Caco-2 (cell line): ENCODE measurements at regions of chr4 and their contacts with region 1.

Region 1: DNA sequence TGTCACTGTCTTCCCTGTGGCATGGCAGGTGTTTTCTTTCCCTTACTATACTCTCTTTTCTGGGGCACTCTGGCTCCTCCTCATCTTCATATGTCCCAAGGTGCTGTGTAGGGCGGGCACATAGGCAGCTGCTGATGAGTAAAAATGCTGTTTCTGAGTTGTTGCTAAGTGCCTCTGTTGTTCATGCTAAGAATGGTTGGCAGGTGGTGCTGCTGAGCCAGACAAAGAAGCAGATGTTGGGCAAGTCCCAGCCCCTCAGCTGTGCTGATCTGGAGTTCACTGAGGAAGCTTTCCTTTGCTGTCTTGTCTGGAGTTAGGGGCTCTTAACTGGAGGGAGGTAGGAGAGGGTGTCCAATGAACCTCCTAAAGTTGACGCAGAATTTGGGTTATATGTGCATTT is 40.6 kb downstream of the HADH start:
- DNase-seq: peak; percentile 53 to 58
- H3K4me3 ChIP-seq: no peak overlapping the region
- H3K4me3 Mint-ChIP-seq: no peak overlapping the region
- H3K27ac Mint-ChIP-seq: no peak overlapping the region
- H3K4me1 ChIP-seq: no peaks in the 10 kb centered on the region
- H3K4me1 Mint-ChIP-seq: no peaks in the 10 kb centered on the region
- H3K27me3 ChIP-seq: no peaks in the 10 kb centered on the region
- H3K27me3 Mint-ChIP-seq: no peaks in the 10 kb centered on the region
- CTCF ChIP-seq: peak; percentile 45 to 60

Region 2: GRCh38 chr4:108053251-108053711 is 22.9 kb after region 1 on chr4:
- CTCF ChIA-PET with region 1: no interaction called
- POLR2A ChIA-PET with region 1: no interaction called
- intact Hi-C with region 1: no loop called
- DNase-seq: no peak
- H3K4me3 ChIP-seq: no peak overlapping the region
- H3K4me3 Mint-ChIP-seq: no peak overlapping the region
- H3K27ac Mint-ChIP-seq: no peak overlapping the region
- H3K4me1 ChIP-seq: peaks cover 17% of the 10 kb centered on the region
- H3K4me1 Mint-ChIP-seq: peaks cover 7% of the 10 kb centered on the region
- H3K27me3 ChIP-seq: no peaks in the 10 kb centered on the region
- H3K27me3 Mint-ChIP-seq: no peaks in the 10 kb centered on the region
- CTCF ChIP-seq: no peak

Region 3: GRCh38 chr4:108181704-108182103 is 151.4 kb after region 1 on chr4:
- CTCF ChIA-PET with region 1: no interaction called
- POLR2A ChIA-PET with region 1: no interaction called
- intact Hi-C with region 1: loop called (anchors 1 kb)
- DNase-seq: no peak
- H3K4me3 ChIP-seq: no peak overlapping the region
- H3K4me3 Mint-ChIP-seq: no peak overlapping the region
- H3K27ac Mint-ChIP-seq: no peak overlapping the region
- H3K4me1 ChIP-seq: no peaks in the 10 kb centered on the region
- H3K4me1 Mint-ChIP-seq: no peaks in the 10 kb centered on the region
- H3K27me3 ChIP-seq: no peaks in the 10 kb centered on the region
- H3K27me3 Mint-ChIP-seq: peaks cover 8% of the 10 kb centered on the region
- CTCF ChIP-seq: peak; percentile 41 to 45

Region 4: GRCh38 chr4:108492816-108493595 is 462.7 kb after region 1 on chr4:
- CTCF ChIA-PET with region 1: no interaction called
- POLR2A ChIA-PET with region 1: no interaction called
- intact Hi-C with region 1: loop called (anchors 5 kb)
- DNase-seq: peak in 1 of 2 experiments; percentile 30
- H3K4me3 ChIP-seq: no peak overlapping the region
- H3K4me3 Mint-ChIP-seq: no peak overlapping the region
- H3K27ac Mint-ChIP-seq: no peak overlapping the region
- H3K4me1 ChIP-seq: no peaks in the 10 kb centered on the region
- H3K4me1 Mint-ChIP-seq: no peaks in the 10 kb centered on the region
- H3K27me3 ChIP-seq: no peaks in the 10 kb centered on the region
- H3K27me3 Mint-ChIP-seq: no peaks in the 10 kb centered on the region
- CTCF ChIP-seq: peak; percentile 37 to 55

Region 5: DNA sequence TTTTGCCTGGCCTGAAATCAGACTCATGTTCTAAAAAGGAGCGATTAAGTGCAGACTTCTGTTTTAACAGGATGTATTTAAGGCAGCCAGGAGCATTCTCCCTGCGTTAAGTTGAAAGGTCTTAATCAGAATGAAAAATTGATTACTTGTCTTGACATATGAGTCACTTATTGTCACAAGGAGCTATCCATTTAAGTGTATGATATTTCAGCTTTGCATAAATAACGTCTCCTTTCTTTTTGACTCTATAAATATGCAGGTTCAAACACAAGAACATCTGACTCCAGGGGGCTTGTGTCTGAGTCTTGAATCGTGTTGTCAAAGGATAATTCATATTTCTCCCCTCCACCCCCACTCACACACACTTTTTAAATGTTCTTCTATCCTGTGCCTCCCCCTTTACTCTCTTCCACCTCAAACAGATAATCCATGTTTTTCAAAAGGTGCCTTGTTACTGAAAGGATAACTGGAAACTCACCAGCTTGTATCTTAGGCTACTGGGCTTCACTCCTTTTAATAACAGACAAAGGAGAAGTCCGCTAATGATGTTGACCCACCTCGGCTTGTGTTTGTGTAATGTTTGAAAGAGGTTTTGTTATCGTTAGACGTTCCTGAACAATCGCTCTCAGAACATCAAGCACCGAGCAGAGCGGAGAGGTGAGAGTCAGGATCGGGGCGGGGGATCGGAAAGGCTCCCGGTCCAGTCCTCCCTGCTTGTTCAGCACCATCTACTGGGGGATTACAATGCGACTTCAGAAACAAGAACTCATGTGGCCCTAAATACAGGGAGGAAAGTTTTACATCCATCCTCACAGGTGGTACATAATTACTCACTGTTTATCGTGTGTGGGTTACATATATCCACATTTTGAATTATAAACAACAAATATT is 482.5 kb after region 1 on chr4:
- CTCF ChIA-PET with region 1: no interaction called
- POLR2A ChIA-PET with region 1: no interaction called
- intact Hi-C with region 1: loop called (anchors 1 kb)
- DNase-seq: peak; percentile 63 to 65
- H3K4me3 ChIP-seq: no peak overlapping the region
- H3K4me3 Mint-ChIP-seq: peak overlapping the region; percentile 47
- H3K27ac Mint-ChIP-seq: no peak overlapping the region
- H3K4me1 ChIP-seq: no peaks in the 10 kb centered on the region
- H3K4me1 Mint-ChIP-seq: no peaks in the 10 kb centered on the region
- H3K27me3 ChIP-seq: no peaks in the 10 kb centered on the region
- H3K27me3 Mint-ChIP-seq: peaks cover 13% of the 10 kb centered on the region
- CTCF ChIP-seq: peak; percentile 35 to 58

Region 6: GRCh38 chr4:108570993-108571569 is 540.7 kb after region 1 on chr4:
- CTCF ChIA-PET with region 1: interaction called, 11 read pairs
- POLR2A ChIA-PET with region 1: no interaction called
- intact Hi-C with region 1: loop called (anchors 1 kb)
- DNase-seq: no peak
- H3K4me3 ChIP-seq: no peak overlapping the region
- H3K4me3 Mint-ChIP-seq: no peak overlapping the region
- H3K27ac Mint-ChIP-seq: no peak overlapping the region
- H3K4me1 ChIP-seq: no peaks in the 10 kb centered on the region
- H3K4me1 Mint-ChIP-seq: peaks cover 6% of the 10 kb centered on the region
- H3K27me3 ChIP-seq: no peaks in the 10 kb centered on the region
- H3K27me3 Mint-ChIP-seq: peaks cover 3% of the 10 kb centered on the region
- CTCF ChIP-seq: no peak